Natural killer cell (primary cell): ENCODE measurements at regions of chr18 and their contacts with region 1.

Region 1: GRCh38 chr18:51933903-51934302 is 406.1 kb upstream of the DCC start:
- DNase-seq: no peak
- ATAC-seq: no peak
- H3K4me3 ChIP-seq: no peak overlapping the region
- H3K4me3 Mint-ChIP-seq: no peak overlapping the region
- H3K27ac ChIP-seq: no peak overlapping the region
- H3K27ac Mint-ChIP-seq: no peak overlapping the region
- H3K4me1 ChIP-seq: no peaks in the 10 kb centered on the region
- H3K4me1 Mint-ChIP-seq: no peaks in the 10 kb centered on the region
- H3K27me3 ChIP-seq: no peaks in the 10 kb centered on the region
- H3K27me3 Mint-ChIP-seq: no peaks in the 10 kb centered on the region
- CTCF ChIP-seq: no peak

Region 2: GRCh38 chr18:51884039-51884438 is 49.9 kb before region 1 on chr18:
- intact Hi-C with region 1: loop called (anchors 5 kb)
- DNase-seq: no peak
- ATAC-seq: no peak
- H3K4me3 ChIP-seq: no peak overlapping the region
- H3K4me3 Mint-ChIP-seq: no peak overlapping the region
- H3K27ac ChIP-seq: no peak overlapping the region
- H3K27ac Mint-ChIP-seq: no peak overlapping the region
- H3K4me1 ChIP-seq: no peaks in the 10 kb centered on the region
- H3K4me1 Mint-ChIP-seq: no peaks in the 10 kb centered on the region
- H3K27me3 ChIP-seq: no peaks in the 10 kb centered on the region
- H3K27me3 Mint-ChIP-seq: no peaks in the 10 kb centered on the region
- CTCF ChIP-seq: no peak

Region 3: GRCh38 chr18:51953521-51953920 is 19.6 kb after region 1 on chr18:
- intact Hi-C with region 1: no loop called
- DNase-seq: no peak
- ATAC-seq: no peak
- H3K4me3 ChIP-seq: no peak overlapping the region
- H3K4me3 Mint-ChIP-seq: no peak overlapping the region
- H3K27ac ChIP-seq: no peak overlapping the region
- H3K27ac Mint-ChIP-seq: no peak overlapping the region
- H3K4me1 ChIP-seq: no peaks in the 10 kb centered on the region
- H3K4me1 Mint-ChIP-seq: no peaks in the 10 kb centered on the region
- H3K27me3 ChIP-seq: no peaks in the 10 kb centered on the region
- H3K27me3 Mint-ChIP-seq: no peaks in the 10 kb centered on the region
- CTCF ChIP-seq: no peak